Stomach (tissue), 19 donors: ENCODE measurements at regions of chr15 and their contacts with region 1.

Region 1: DNA sequence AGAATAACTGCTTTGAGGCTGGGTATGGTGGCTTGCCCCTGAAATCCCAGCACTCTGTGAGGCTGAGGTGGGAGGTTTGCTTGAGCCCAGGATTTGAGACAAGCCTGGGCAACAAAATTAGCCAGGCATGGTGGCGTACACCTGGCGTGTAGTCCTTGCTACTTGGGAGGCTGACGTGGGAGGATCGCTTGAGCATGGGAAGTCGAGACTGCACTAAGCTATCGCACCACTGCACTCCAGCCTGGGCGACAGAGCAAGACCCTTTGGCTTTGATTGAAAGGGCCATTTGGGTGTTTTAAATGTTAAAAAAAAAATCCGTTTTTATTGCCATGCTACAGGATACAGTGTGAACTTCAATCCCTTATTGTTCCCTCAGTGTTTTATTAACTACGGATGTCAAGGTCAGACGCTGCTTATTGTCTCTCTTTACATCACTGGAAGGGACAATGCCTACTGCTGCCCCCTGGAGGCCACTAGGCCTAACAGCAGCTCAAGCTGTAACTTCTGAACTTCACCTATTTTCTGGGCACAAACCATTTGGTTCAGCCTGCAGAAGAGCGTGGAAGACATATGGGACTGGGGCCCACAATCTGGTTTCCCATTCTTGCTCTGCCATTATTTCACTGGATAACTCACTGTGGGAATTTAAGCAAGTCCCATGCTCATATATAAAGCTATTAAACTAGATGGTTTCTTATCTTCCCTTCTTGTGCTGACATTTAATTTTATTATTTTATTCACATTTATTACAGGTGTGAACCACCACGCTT is 15.3 kb upstream of the IREB2 start:
- DNase-seq: peak; percentile 72 to 86
- H3K4me3 ChIP-seq: no peak overlapping the region
- H3K27ac ChIP-seq: no peak overlapping the region
- H3K4me1 ChIP-seq: peaks cover 0 to 7% (median 0%) of the 10 kb centered on the region in 4 donors
- H3K27me3 ChIP-seq: peaks cover 0 to 10% (median 0%) of the 10 kb centered on the region in 3 donors
- CTCF ChIP-seq: peak in 5 of 7 experiments; percentile 75 to 88 (median 86)
- EP300 ChIP-seq: no peak
- POLR2A ChIP-seq: no peak

Region 2: DNA sequence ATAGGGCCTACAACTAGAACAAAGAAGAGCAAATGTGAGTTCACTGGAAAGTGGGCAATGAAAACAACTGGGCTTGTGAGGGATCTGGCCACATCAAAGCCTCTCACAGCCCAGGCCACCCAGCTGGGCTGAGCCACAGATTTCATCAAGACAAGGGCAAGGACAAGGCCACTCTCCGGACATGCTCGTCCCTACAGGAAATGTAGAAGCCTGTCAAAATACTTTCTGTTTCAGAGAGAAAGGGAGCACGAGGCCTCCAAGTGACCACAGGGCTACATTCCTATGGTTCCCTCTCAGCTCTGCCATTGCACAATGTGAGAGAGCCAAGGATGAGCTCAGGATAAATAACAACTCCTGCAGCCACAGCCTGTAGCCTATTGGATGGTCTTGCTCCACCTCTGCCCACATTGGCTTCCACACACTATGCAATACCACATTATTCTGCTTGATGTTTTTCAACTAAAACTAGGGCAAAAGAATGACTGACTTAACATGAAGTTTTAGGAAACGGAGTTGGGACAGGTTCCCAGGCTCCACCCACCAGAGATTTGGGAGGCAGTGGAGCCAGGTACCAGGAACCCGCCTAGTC is 357.4 kb before region 1 on chr15:
- intact Hi-C with region 1: no loop called
- DNase-seq: peak; percentile 47 to 65
- H3K4me3 ChIP-seq: no peak overlapping the region
- H3K27ac ChIP-seq: peak overlapping the region; percentile 53 to 98 (median 87)
- H3K4me1 ChIP-seq: peaks cover 84 to 100% (median 94%) of the 10 kb centered on the region in 4 donors
- H3K27me3 ChIP-seq: no peaks in the 10 kb centered on the region
- CTCF ChIP-seq: no peak
- EP300 ChIP-seq: no peak
- POLR2A ChIP-seq: no peak

Region 3: GRCh38 chr15:78314181-78314581 is 108.6 kb before region 1 on chr15:
- intact Hi-C with region 1: loop called (anchors 5 kb)
- DNase-seq: no peak
- H3K4me3 ChIP-seq: no peak overlapping the region
- H3K27ac ChIP-seq: no peak overlapping the region
- H3K4me1 ChIP-seq: peaks cover 5 to 10% (median 8%) of the 10 kb centered on the region in 4 donors
- H3K27me3 ChIP-seq: peaks cover 0 to 30% (median 0%) of the 10 kb centered on the region in 3 donors
- CTCF ChIP-seq: no peak
- EP300 ChIP-seq: no peak
- POLR2A ChIP-seq: no peak